WTC11 (cell line): ENCODE measurements at regions of chr7 and their contacts with region 1.

Region 1: GRCh38 chr7:39580149-39580874 is 14.1 kb downstream of the YAE1 start:
- DNase-seq: peak; percentile 76
- ATAC-seq: peak; percentile 95
- H3K4me3 Mint-ChIP-seq: no peak overlapping the region
- H3K27ac Mint-ChIP-seq: 0 out of 2 replicates have a peak overlapping the region, but pooled peaks have one; percentile 66
- H3K4me1 Mint-ChIP-seq: peaks cover 23% of the 10 kb centered on the region
- H3K27me3 Mint-ChIP-seq: no peaks in the 10 kb centered on the region
- CTCF ChIP-seq: peak; percentile 78

Region 2: DNA sequence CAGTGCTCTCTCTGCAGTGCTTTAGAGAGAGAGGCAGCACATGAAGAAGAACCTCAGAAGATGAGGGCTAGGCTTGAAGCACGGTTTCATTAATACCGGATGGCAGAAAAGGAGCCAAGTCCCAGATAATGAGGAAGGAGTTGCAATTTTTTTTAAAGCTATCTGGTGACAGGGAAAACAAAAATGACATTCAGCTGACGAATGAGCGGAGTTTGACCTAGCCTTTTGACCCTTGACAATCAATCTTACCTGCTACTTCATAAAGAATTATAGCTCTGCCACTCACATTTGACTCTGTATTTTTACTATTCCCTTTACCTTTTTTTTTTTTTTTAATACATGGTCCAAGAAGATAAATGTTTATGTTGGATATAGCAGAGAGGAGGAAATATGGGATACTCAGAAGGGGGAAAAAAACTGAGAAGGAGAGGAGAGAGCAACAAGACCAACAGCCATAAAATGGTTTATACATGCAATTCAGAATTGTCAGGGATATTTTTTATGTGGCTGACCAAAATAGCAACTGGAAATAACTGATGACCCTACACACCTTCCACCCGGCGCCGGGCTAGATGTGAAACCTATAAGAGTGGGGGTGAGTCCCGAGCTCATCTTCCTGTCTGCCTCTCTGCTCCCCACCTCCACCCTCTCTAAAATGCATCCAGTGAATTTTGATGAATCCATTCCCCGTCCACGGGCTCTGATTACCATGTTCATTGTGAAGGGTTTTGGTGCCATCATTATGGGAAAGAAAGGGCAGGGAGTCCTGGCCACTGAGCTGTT is 288.5 kb before region 1 on chr7:
- CTCF ChIA-PET with region 1: no interaction called
- POLR2A ChIA-PET with region 1: no interaction called
- DNase-seq: no peak
- ATAC-seq: no peak
- H3K4me3 Mint-ChIP-seq: no peak overlapping the region
- H3K27ac Mint-ChIP-seq: no peak overlapping the region
- H3K4me1 Mint-ChIP-seq: peaks cover 7% of the 10 kb centered on the region
- H3K27me3 Mint-ChIP-seq: no peaks in the 10 kb centered on the region
- CTCF ChIP-seq: no peak

Region 3: DNA sequence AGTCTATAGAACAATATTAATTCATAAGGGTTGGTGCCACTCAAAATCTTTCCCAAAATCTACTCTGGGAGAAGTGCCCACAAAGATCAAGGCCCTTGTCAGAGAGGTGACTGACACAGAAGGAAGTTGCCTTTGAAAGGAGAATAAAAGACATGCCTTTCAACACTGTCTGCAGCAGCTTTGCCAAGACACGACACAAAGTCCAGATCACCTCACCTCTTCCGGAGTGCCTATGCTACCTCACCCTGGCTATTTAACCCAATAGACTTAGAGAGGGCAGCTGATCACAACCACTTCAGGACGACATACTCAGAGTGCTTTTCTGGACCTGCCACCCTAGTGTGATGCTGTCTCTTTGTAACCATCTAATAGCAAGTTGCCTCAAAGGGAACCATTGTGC is 63.1 kb before region 1 on chr7:
- CTCF ChIA-PET with region 1: no interaction called
- POLR2A ChIA-PET with region 1: interaction called, 13 read pairs
- DNase-seq: no peak
- ATAC-seq: no peak
- H3K4me3 Mint-ChIP-seq: no peak overlapping the region
- H3K27ac Mint-ChIP-seq: no peak overlapping the region
- H3K4me1 Mint-ChIP-seq: peaks cover 9% of the 10 kb centered on the region
- H3K27me3 Mint-ChIP-seq: no peaks in the 10 kb centered on the region
- CTCF ChIP-seq: no peak

Region 4: DNA sequence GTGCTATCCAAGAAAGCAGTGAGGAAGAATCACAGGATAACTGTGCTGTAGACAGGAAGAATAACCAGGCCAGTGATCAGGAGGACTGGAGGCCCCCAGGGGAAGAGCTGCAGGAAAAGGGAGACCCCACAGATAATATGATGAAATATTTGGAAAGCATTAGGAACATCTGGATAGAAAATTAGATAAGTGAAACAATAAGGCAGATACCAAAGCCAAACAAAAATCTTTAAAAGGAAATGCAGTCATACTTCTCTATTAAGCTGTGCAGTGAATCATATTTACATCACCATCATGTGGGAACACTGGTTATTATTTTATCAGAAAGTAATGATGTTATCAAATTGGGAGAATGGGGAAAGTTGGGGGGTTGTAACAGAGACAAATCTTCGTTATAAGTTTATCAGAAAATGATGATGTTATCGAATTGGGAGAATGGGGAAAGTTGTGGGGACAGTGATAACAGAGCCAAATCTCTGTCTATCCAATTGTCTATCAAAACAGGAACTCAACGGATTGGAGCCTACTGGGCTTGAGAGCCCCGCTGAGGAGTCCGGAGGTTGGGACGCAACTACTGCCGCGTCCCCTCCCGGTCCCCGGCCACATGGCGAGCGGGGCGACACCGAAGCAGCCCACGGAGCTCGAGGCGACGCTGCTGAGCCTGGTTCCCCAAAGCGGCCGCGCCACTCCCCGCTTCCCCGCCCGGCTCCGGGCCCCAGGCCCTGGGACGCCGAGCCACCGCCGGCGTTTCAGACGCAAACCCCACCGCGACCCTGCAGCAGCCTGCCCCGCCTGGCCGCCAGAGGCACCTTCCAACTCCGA is 29.0 kb after region 1 on chr7:
- CTCF ChIA-PET with region 1: interaction called, 13 read pairs
- POLR2A ChIA-PET with region 1: no interaction called
- DNase-seq: peak; percentile 65
- ATAC-seq: peak; percentile 95
- H3K4me3 Mint-ChIP-seq: peak overlapping the region; percentile 65
- H3K27ac Mint-ChIP-seq: no peak overlapping the region
- H3K4me1 Mint-ChIP-seq: peaks cover 17% of the 10 kb centered on the region
- H3K27me3 Mint-ChIP-seq: peaks cover 30% of the 10 kb centered on the region
- CTCF ChIP-seq: no peak

Region 5: GRCh38 chr7:39666562-39666961 is 86.2 kb after region 1 on chr7:
- CTCF ChIA-PET with region 1: interaction called, 10 read pairs
- POLR2A ChIA-PET with region 1: no interaction called
- DNase-seq: no peak
- ATAC-seq: peak; percentile 55
- H3K4me3 Mint-ChIP-seq: no peak overlapping the region
- H3K27ac Mint-ChIP-seq: no peak overlapping the region
- H3K4me1 Mint-ChIP-seq: peaks cover 42% of the 10 kb centered on the region
- H3K27me3 Mint-ChIP-seq: no peaks in the 10 kb centered on the region; the same call in 1 of the 2 replicates
- CTCF ChIP-seq: no peak

Region 6: DNA sequence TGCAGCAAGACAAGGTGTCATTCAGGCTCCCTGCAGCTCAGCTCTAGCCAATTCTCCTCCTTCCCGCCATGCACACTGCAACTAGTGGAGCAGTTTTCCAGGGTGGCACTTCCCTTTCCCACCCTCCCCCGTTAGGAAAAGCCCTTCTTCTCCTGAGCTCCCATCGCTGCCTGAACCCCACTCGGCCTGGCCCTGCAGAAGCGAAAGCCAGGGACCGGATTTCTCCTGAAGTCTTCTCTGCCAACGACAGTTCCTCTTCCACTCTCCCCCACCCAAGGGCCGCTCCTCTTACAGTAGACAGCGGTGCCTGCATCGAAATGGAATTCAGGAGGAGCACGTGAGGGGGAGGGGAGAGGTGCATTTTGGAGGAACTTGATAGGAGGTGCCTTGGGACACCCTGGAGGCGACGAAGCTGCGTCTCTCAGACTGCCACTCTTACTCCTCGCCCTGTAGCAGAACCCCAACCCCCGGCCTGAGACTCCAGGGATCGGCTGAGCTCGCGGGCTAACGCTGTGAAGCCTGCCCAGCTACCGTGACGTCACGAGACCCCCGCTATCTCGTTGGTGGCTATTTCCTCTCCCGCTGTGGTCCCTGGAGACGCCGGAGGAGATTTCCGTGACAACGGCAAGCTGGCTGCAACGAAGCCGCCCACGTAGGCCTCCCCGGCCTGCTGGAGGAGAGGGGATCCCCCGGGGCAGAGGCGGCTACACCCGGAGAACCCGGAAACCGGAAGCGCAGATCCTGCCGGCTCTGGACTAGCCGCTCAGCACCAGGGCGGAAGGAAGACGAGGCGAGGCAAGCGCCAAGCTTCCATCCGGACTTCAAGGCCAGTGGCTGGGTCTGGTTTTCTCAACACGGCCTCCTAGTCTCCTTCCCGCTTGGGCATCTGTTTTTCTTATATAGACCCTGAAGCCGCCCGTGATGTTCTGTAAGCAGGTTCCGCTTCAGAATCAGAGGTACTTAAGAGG is 152.8 kb after region 1 on chr7:
- CTCF ChIA-PET with region 1: interaction called, 42 read pairs
- POLR2A ChIA-PET with region 1: interaction called, 4 read pairs
- DNase-seq: peak; percentile 97
- ATAC-seq: peak; percentile 92
- H3K4me3 Mint-ChIP-seq: peak overlapping the region; percentile 69
- H3K27ac Mint-ChIP-seq: peak overlapping the region; percentile 95
- H3K4me1 Mint-ChIP-seq: peaks cover 30% of the 10 kb centered on the region
- H3K27me3 Mint-ChIP-seq: peaks cover 23% of the 10 kb centered on the region
- CTCF ChIP-seq: no peak

Region 7: GRCh38 chr7:39761449-39761848 is 181.1 kb after region 1 on chr7:
- CTCF ChIA-PET with region 1: interaction called, 13 read pairs
- POLR2A ChIA-PET with region 1: no interaction called
- DNase-seq: no peak
- ATAC-seq: no peak
- H3K4me3 Mint-ChIP-seq: no peak overlapping the region
- H3K27ac Mint-ChIP-seq: no peak overlapping the region; the same call in 1 of the 2 replicates
- H3K4me1 Mint-ChIP-seq: peaks cover 40% of the 10 kb centered on the region
- H3K27me3 Mint-ChIP-seq: peaks cover 15% of the 10 kb centered on the region
- CTCF ChIP-seq: no peak

Region 8: GRCh38 chr7:40057292-40057691 is 477.0 kb after region 1 on chr7:
- CTCF ChIA-PET with region 1: interaction called, 10 read pairs
- POLR2A ChIA-PET with region 1: no interaction called
- DNase-seq: no peak
- ATAC-seq: no peak
- H3K4me3 Mint-ChIP-seq: no peak overlapping the region
- H3K27ac Mint-ChIP-seq: no peak overlapping the region
- H3K4me1 Mint-ChIP-seq: 0 out of 2 replicates have a peak, but pooled peaks cover 3% of the 10 kb centered on the region
- H3K27me3 Mint-ChIP-seq: no peaks in the 10 kb centered on the region
- CTCF ChIP-seq: no peak